ENCODE measurements at regions of chr15 and their contacts with region 1.

Region 1: DNA sequence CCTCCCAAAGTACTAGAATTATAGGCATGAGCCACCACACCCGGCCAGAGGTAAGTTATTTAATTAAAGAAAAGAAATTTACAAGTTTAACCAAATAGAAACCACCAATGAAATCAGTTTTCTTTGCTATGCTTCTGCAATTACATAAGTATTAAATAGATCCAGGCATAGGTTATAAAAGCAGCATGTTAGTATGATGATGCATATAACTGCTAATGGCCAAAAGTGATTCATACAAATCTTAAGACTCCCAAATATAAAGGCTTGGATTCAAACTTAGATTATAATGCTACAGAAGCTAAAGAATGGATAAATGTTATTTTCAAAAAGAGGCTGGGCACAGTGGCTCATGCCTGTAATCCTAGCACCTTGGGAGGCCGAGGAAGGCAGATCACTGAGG is 32.8 kb upstream of the HDC start:
- DNase-seq: no peak
- H3K4me3 ChIP-seq: no peak overlapping the region
- H3K27me3 ChIP-seq: no peaks in the 10 kb centered on the region
- CTCF ChIP-seq: no peak

Region 2: GRCh38 chr15:48330855-48331795 is 1967.2 kb before region 1 on chr15 and contains the start of gene DUT:
- CTCF ChIA-PET with region 1: no interaction called
- POLR2A ChIA-PET with region 1: interaction called, 10 read pairs
- DNase-seq: no peak
- H3K4me3 ChIP-seq: peak within 1 kb of the TSS; percentile 93
- H3K27me3 ChIP-seq: no peaks in the 10 kb centered on the region
- CTCF ChIP-seq: no peak
- polyA plus RNA-seq, gene DUT: 49.0 and 49.3 TPM in 2 replicates

Region 3: GRCh38 chr15:50119063-50120040 is 179.0 kb before region 1 on chr15 and contains the start of gene ATP8B4:
- CTCF ChIA-PET with region 1: no interaction called
- POLR2A ChIA-PET with region 1: no interaction called
- DNase-seq: no peak
- H3K4me3 ChIP-seq: no peak within 1 kb of the TSS
- H3K27me3 ChIP-seq: no peaks in the 10 kb centered on the region
- CTCF ChIP-seq: no peak
- polyA plus RNA-seq, gene ATP8B4: 0.23 and 0.44 TPM in 2 replicates

Region 4: DNA sequence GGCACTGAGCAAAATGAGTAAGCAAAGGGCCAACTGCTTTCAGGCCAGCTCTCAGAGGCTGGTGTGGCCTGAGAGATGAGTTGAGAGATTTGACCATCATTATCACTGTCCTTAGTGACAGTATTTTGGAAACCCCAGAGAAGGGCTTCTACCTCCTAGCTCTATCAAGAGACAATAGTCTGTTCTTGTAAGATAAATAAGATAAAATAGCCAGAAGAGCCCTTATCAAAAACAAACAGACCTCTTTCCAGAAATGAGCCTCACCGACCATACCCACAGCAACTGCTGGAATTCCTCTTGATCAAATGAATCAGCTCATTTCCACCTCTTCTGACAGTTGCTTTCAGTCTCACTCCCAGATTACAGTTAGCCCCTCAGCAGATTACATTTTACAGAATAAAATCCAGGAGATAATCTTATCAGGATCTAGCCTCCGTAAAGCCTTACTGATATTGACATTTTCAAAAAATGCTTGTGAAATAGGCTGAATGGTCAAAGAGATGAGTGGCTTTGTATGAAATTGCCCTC is 37.3 kb before region 1 on chr15:
- CTCF ChIA-PET with region 1: no interaction called
- POLR2A ChIA-PET with region 1: no interaction called
- DNase-seq: no peak
- H3K4me3 ChIP-seq: no peak overlapping the region
- H3K27me3 ChIP-seq: no peaks in the 10 kb centered on the region; the same call in 1 of the 2 replicates
- CTCF ChIP-seq: no peak